ENCODE measurements at regions of chr2 and their contacts with region 1.

Region 1: DNA sequence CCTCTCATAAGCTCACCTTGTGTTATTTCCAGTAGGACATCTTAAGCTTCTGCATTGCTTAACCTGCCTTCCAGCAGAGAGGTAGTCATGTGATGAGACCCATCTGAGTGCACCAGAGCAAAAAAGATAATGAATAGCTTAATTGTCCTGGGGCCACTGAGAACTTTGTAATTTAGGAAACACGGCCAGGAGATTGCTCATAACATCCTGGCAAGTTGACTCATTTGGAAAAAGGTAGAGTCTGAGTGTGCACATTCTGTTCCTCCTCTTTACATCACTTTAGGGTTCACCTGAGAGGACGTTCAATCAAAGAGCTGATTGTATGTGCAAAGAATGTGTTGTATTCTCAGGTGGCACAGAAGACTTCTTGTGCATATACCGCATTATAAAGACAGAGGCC is 830.2 kb upstream of the SOX11 start:
- DNase-seq: peak in 1 of 2 donors; percentile 28
- H3K4me3 ChIP-seq: no peak overlapping the region
- H3K27ac ChIP-seq: no peak overlapping the region
- H3K4me1 ChIP-seq: no peaks in the 10 kb centered on the region
- H3K27me3 ChIP-seq: no peaks in the 10 kb centered on the region
- CTCF ChIP-seq: no peak
- POLR2A ChIP-seq: no peak

Region 2: DNA sequence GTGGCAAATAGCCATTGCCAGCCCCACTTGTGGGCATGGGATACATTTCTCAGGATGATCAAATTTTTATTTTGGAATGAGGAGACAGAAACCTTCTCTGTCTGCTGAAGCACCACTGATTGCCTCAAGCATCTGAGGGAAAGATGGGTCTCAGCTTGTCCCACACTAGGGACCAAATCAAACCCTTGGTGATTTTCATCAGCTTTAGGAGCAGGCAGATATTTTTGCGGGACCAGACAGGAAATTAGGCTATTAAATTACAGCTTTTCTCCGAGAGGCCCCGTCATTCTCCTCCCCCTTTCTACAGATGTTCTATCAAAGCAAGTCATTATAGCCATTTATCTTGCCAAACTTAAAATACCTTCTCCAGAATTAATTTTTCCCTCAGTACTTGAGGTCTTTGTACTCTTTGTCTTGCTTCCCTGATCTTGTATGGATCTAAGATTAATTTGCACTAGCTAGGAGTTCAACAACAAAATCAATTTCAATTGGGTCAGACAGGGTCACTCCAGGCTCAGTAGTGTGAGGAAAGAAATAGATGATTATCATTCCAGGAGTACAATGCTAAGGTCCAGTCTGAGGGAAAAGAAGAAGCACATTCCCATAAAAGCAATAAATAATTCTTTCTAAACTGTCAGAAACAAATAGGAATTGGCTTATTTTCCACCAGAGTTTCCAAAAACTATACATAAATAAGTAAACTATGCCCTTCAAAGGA is 12.0 kb after region 1 on chr2:
- intact Hi-C with region 1: no loop called
- DNase-seq: peak in 1 of 2 donors; percentile 40
- H3K4me3 ChIP-seq: no peak overlapping the region
- H3K27ac ChIP-seq: peak overlapping the region in 1 of 2 donors; percentile 5
- H3K4me1 ChIP-seq: no peaks in the 10 kb centered on the region
- H3K27me3 ChIP-seq: no peaks in the 10 kb centered on the region
- CTCF ChIP-seq: no peak
- POLR2A ChIP-seq: no peak

Region 3: GRCh38 chr2:5764041-5764440 is 902.0 kb after region 1 on chr2:
- intact Hi-C with region 1: loop called (anchors 5 kb)
- DNase-seq: no peak
- H3K4me3 ChIP-seq: no peak overlapping the region
- H3K27ac ChIP-seq: no peak overlapping the region
- H3K4me1 ChIP-seq: no peaks in the 10 kb centered on the region
- H3K27me3 ChIP-seq: no peaks in the 10 kb centered on the region
- CTCF ChIP-seq: no peak
- POLR2A ChIP-seq: no peak